CD8-positive, alpha-beta T cell (primary cell): ENCODE measurements at regions of chr1 and their contacts with region 1.

Region 1: GRCh38 chr1:66929999-66930822 is 5.4 kb downstream of the MIER1 start:
- DNase-seq: peak; percentile 88 to 97 (median 95)
- ATAC-seq: peak; percentile 70
- H3K4me3 ChIP-seq: peak overlapping the region; percentile 86 to 90
- H3K4me3 Mint-ChIP-seq: peak overlapping the region; percentile 86
- H3K27ac ChIP-seq: peak overlapping the region; percentile 87 to 90
- H3K27ac Mint-ChIP-seq: peak overlapping the region; percentile 94
- H3K4me1 ChIP-seq: peaks cover 40% of the 10 kb centered on the region
- H3K4me1 Mint-ChIP-seq: peaks cover 61% of the 10 kb centered on the region
- H3K27me3 ChIP-seq: no peaks in the 10 kb centered on the region
- H3K27me3 Mint-ChIP-seq: no peaks in the 10 kb centered on the region
- CTCF ChIP-seq: peak; percentile 17

Region 2: GRCh38 chr1:65254319-65255034 is 1675.7 kb before region 1 on chr1:
- CTCF ChIA-PET with region 1: no interaction called
- POLR2A ChIA-PET with region 1: no interaction called
- intact Hi-C with region 1: loop called in 1 of 2 experiments (anchors 10 kb)
- DNase-seq: peak; percentile 72 to 93 (median 84)
- ATAC-seq: peak; percentile 97
- H3K4me3 ChIP-seq: peak overlapping the region; percentile 77 to 91
- H3K4me3 Mint-ChIP-seq: peak overlapping the region; percentile 97
- H3K27ac ChIP-seq: peak overlapping the region in 1 of 2 experiments; percentile 57
- H3K27ac Mint-ChIP-seq: no peak overlapping the region
- H3K4me1 ChIP-seq: peaks cover 17% of the 10 kb centered on the region
- H3K4me1 Mint-ChIP-seq: peaks cover 18% of the 10 kb centered on the region
- H3K27me3 ChIP-seq: no peaks in the 10 kb centered on the region
- H3K27me3 Mint-ChIP-seq: peaks cover 10% of the 10 kb centered on the region
- CTCF ChIP-seq: no peak

Region 3: DNA sequence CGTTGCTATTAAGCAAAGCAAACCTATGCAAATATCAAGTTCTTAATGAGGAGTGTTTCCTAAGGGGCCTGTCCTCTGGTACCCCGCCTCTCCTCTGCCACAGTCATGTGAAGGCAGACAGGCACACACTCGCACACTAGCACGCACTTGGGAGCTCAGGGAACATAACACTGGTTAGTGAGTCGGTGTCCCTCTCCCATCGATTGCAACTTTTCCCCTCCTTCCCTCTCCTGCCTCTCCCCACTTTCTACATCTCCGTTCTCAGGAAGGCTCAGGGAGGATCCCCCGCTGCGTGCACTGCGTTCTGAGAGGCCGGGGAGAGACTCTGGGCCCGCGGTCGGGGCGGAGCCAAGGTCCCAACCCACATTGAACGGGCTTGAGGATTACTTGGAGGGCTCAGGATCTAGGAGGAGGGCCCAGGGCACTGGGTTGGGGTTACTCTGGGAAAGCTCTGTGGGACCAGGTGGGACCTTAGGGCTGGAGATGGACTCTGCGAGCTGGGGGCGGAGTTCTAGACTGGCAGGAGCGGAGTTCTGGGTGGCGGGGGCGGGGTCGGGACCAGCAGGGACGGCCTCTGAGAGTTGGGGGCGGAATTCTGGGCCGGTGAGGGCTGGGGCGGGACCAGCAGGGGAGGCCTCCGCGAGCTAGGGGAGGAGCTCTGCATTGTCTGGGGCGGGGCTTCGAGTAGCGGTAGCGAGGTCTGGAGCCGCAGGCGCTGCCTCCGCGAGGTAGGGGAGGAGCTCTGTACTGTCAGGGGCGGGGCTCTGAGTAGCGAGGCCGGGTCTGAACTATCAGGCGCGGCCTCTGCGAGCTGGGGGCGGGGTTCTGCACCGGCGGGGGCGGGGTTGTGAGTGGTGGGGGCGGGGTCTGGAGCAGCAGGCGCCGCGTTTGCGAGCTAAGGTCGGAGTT is 1510.3 kb before region 1 on chr1:
- CTCF ChIA-PET with region 1: no interaction called
- POLR2A ChIA-PET with region 1: no interaction called
- intact Hi-C with region 1: loop called in 1 of 2 experiments (anchors 5 kb)
- DNase-seq: peak; percentile 97 to 99 (median 98)
- ATAC-seq: peak; percentile 94
- H3K4me3 ChIP-seq: peak overlapping the region; percentile 96 to 98
- H3K4me3 Mint-ChIP-seq: no peak overlapping the region
- H3K27ac ChIP-seq: peak overlapping the region; percentile 69 to 71
- H3K27ac Mint-ChIP-seq: peak overlapping the region; percentile 93
- H3K4me1 ChIP-seq: peaks cover 15% of the 10 kb centered on the region
- H3K4me1 Mint-ChIP-seq: peaks cover 21% of the 10 kb centered on the region
- H3K27me3 ChIP-seq: peaks cover 0 to 3% of the 10 kb centered on the region in 2 experiments
- H3K27me3 Mint-ChIP-seq: no peaks in the 10 kb centered on the region
- CTCF ChIP-seq: no peak

Region 4: DNA sequence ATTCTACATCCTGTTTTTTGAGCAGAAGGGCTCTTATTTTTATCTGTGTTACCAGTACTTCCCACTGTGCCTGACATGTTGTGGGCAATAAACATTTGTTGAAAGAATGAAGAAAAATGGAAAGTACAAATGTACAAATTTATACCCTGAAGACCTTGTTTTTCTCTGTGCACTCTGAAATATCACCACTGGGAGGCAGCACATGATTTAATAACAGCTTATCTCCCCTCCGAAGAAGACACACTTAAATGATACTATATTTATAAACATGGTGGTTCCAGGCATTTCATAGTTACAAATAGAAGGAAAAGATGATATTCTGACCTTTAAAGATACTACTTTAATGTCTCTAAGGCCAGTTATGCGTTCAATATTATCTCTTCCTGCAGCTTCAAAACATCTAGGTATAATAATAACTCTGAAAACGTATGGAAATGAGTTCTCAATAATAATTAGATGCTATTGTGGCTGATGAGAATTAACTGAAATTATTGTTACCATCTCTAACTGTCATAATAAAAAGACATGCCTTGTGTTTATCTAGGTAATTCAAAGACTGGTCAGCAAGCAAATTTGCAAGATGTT is 165.1 kb before region 1 on chr1:
- CTCF ChIA-PET with region 1: interaction called, 4 read pairs
- POLR2A ChIA-PET with region 1: interaction called, 3 read pairs
- intact Hi-C with region 1: loop called in 1 of 2 experiments (anchors 1 kb)
- DNase-seq: peak; percentile 5 to 73 (median 53)
- ATAC-seq: peak; percentile 83
- H3K4me3 ChIP-seq: no peak overlapping the region
- H3K4me3 Mint-ChIP-seq: no peak overlapping the region
- H3K27ac ChIP-seq: no peak overlapping the region
- H3K27ac Mint-ChIP-seq: no peak overlapping the region
- H3K4me1 ChIP-seq: no peaks in the 10 kb centered on the region
- H3K4me1 Mint-ChIP-seq: peaks cover 15% of the 10 kb centered on the region
- H3K27me3 ChIP-seq: no peaks in the 10 kb centered on the region
- H3K27me3 Mint-ChIP-seq: no peaks in the 10 kb centered on the region
- CTCF ChIP-seq: peak; percentile 84

Region 5: GRCh38 chr1:66944330-66945274 is 14.4 kb after region 1 on chr1:
- CTCF ChIA-PET with region 1: no interaction called
- POLR2A ChIA-PET with region 1: interaction called, 6 read pairs
- intact Hi-C with region 1: loop called in 1 of 2 experiments (anchors 1 kb)
- DNase-seq: no peak
- ATAC-seq: no peak
- H3K4me3 ChIP-seq: no peak overlapping the region
- H3K4me3 Mint-ChIP-seq: no peak overlapping the region
- H3K27ac ChIP-seq: no peak overlapping the region
- H3K27ac Mint-ChIP-seq: no peak overlapping the region
- H3K4me1 ChIP-seq: peaks cover 27% of the 10 kb centered on the region
- H3K4me1 Mint-ChIP-seq: peaks cover 74% of the 10 kb centered on the region
- H3K27me3 ChIP-seq: no peaks in the 10 kb centered on the region
- H3K27me3 Mint-ChIP-seq: no peaks in the 10 kb centered on the region
- CTCF ChIP-seq: no peak

Region 6: DNA sequence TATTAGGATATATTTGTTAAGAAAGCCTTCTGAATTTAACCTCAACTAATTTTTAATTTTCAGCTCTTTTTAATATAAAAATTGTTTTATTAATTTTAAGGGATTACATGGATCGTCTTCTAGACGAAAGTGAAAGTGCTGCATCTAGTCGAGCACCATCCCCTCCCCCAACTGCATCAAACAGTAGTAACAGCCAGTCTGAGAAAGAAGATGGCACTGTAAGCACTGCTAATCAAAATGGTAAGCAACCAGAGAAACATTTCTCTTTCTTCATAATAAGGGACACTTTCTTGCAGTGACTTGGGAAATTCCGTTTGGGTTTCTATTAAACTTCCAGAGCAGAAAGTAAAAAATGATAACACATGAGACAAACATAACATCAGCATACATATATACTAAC is 51.5 kb after region 1 on chr1:
- CTCF ChIA-PET with region 1: no interaction called
- POLR2A ChIA-PET with region 1: interaction called, 9 read pairs
- intact Hi-C with region 1: loop called (anchors 2 to 5 kb)
- DNase-seq: peak; percentile 18 to 86 (median 52)
- ATAC-seq: peak; percentile 96
- H3K4me3 ChIP-seq: peak overlapping the region; percentile 38 to 48
- H3K4me3 Mint-ChIP-seq: peak overlapping the region; percentile 75
- H3K27ac ChIP-seq: peak overlapping the region; percentile 44 to 78
- H3K27ac Mint-ChIP-seq: peak overlapping the region; percentile 79
- H3K4me1 ChIP-seq: peaks cover 22% of the 10 kb centered on the region
- H3K4me1 Mint-ChIP-seq: peaks cover 30% of the 10 kb centered on the region
- H3K27me3 ChIP-seq: no peaks in the 10 kb centered on the region
- H3K27me3 Mint-ChIP-seq: no peaks in the 10 kb centered on the region
- CTCF ChIP-seq: no peak

Region 7: DNA sequence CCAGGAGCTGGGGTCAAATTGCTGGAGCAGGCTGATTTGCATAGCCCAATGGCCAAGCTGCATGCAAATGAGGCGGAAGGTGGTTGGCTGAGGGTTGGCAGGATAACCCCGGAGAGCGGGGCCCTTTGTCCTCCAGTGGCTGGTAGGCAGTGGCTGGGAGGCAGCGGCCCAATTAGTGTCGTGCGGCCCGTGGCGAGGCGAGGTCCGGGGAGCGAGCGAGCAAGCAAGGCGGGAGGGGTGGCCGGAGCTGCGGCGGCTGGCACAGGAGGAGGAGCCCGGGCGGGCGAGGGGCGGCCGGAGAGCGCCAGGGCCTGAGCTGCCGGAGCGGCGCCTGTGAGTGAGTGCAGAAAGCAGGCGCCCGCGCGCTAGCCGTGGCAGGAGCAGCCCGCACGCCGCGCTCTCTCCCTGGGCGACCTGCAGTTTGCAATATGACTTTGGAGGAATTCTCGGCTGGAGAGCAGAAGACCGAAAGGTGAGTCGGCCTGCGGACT is 754.9 kb after region 1 on chr1 and contains the start of gene GADD45A:
- CTCF ChIA-PET with region 1: no interaction called
- POLR2A ChIA-PET with region 1: no interaction called
- intact Hi-C with region 1: loop called (anchors 1 to 5 kb)
- DNase-seq: peak; percentile 85 to 98 (median 93)
- ATAC-seq: peak; percentile 85
- H3K4me3 ChIP-seq: peak within 1 kb of the TSS; percentile 79 to 88
- H3K4me3 Mint-ChIP-seq: peak within 1 kb of the TSS; percentile 100
- H3K27ac ChIP-seq: peak within 1 kb of the TSS; percentile 61 to 66
- H3K27ac Mint-ChIP-seq: peak within 1 kb of the TSS; percentile 96
- H3K4me1 ChIP-seq: peaks cover 16% of the 10 kb centered on the region
- H3K4me1 Mint-ChIP-seq: peaks cover 25% of the 10 kb centered on the region
- H3K27me3 ChIP-seq: no peaks in the 10 kb centered on the region
- H3K27me3 Mint-ChIP-seq: no peaks in the 10 kb centered on the region
- CTCF ChIP-seq: no peak
- total RNA-seq, gene GADD45A: 194 to 196 TPM